Activated CD4-positive, alpha-beta memory T cell treated with anti-CD3 and anti-CD28 coated beads for 36 hours (primary cell): ENCODE measurements at regions of chr12 and their contacts with region 1.

Region 1: GRCh38 chr12:107402041-107403022 is 283.3 kb upstream of the PWP1 start:
- DNase-seq: peak; percentile 77
- H3K4me3 Mint-ChIP-seq: no peak overlapping the region
- H3K27ac Mint-ChIP-seq: no peak overlapping the region
- H3K4me1 Mint-ChIP-seq: peaks cover 6% of the 10 kb centered on the region
- H3K27me3 Mint-ChIP-seq: no peaks in the 10 kb centered on the region

Region 2: GRCh38 chr12:107225635-107226034 is 176.7 kb before region 1 on chr12:
- CTCF ChIA-PET with region 1: interaction called, 4 read pairs
- POLR2A ChIA-PET with region 1: no interaction called
- intact Hi-C with region 1: loop called (anchors 10 kb)
- DNase-seq: no peak
- H3K4me3 Mint-ChIP-seq: no peak overlapping the region
- H3K27ac Mint-ChIP-seq: no peak overlapping the region
- H3K4me1 Mint-ChIP-seq: peaks cover 3% of the 10 kb centered on the region
- H3K27me3 Mint-ChIP-seq: peaks cover 19% of the 10 kb centered on the region

Region 3: GRCh38 chr12:107328442-107329133 is 73.7 kb before region 1 on chr12:
- CTCF ChIA-PET with region 1: interaction called, 10 read pairs
- POLR2A ChIA-PET with region 1: no interaction called
- intact Hi-C with region 1: no loop called
- DNase-seq: peak; percentile 51
- H3K4me3 Mint-ChIP-seq: no peak overlapping the region
- H3K27ac Mint-ChIP-seq: no peak overlapping the region
- H3K4me1 Mint-ChIP-seq: peaks cover 63% of the 10 kb centered on the region
- H3K27me3 Mint-ChIP-seq: no peaks in the 10 kb centered on the region

Region 4: DNA sequence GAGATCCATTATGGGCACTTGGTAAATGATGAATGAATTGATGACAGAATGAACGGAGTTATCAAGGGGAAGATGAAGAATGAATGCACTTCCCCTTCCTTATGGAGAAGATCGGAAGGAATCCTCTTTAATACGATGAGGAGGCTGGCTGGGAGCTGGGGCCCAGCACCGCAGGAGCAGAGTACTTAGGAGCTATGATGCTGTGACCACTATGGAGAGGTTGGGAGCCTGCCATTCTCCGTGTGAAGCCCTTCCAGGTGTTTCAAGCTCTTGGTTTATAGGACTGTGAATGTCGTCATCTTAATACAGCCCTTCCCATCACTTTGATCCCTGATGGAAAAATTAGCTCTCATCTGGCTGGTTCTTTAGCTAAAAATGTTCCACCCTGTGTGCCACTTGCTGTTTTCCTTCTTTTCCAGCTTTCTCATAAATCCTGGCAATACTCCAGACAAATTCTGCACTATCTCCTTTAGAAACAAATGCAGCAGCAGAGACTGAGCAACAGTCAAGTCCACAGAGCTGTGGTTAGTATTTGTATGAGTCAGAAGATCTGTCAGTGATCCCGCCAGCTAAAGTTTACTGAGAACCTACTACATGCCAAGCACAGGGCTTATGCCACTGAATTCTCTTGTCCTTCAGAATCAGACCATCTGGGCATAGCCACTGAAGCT is 45.9 kb before region 1 on chr12:
- CTCF ChIA-PET with region 1: interaction called, 16 read pairs
- POLR2A ChIA-PET with region 1: no interaction called
- intact Hi-C with region 1: no loop called
- DNase-seq: no peak
- H3K4me3 Mint-ChIP-seq: no peak overlapping the region
- H3K27ac Mint-ChIP-seq: no peak overlapping the region
- H3K4me1 Mint-ChIP-seq: peaks cover 34% of the 10 kb centered on the region
- H3K27me3 Mint-ChIP-seq: no peaks in the 10 kb centered on the region

Region 5: GRCh38 chr12:107361970-107362369 is 40.4 kb before region 1 on chr12:
- CTCF ChIA-PET with region 1: interaction called, 16 read pairs
- POLR2A ChIA-PET with region 1: no interaction called
- intact Hi-C with region 1: no loop called
- DNase-seq: no peak
- H3K4me3 Mint-ChIP-seq: no peak overlapping the region
- H3K27ac Mint-ChIP-seq: no peak overlapping the region
- H3K4me1 Mint-ChIP-seq: peaks cover 11% of the 10 kb centered on the region
- H3K27me3 Mint-ChIP-seq: no peaks in the 10 kb centered on the region

Region 6: GRCh38 chr12:107372229-107372658 is 30.1 kb before region 1 on chr12:
- CTCF ChIA-PET with region 1: interaction called, 15 read pairs
- POLR2A ChIA-PET with region 1: no interaction called
- intact Hi-C with region 1: loop called (anchors 1 kb)
- DNase-seq: peak; percentile 54
- H3K4me3 Mint-ChIP-seq: no peak overlapping the region
- H3K27ac Mint-ChIP-seq: peak overlapping the region; percentile 89
- H3K4me1 Mint-ChIP-seq: peaks cover 70% of the 10 kb centered on the region
- H3K27me3 Mint-ChIP-seq: no peaks in the 10 kb centered on the region

Region 7: GRCh38 chr12:107444771-107445170 is 42.4 kb after region 1 on chr12:
- CTCF ChIA-PET with region 1: no interaction called
- POLR2A ChIA-PET with region 1: no interaction called
- intact Hi-C with region 1: no loop called
- DNase-seq: no peak
- H3K4me3 Mint-ChIP-seq: no peak overlapping the region
- H3K27ac Mint-ChIP-seq: no peak overlapping the region
- H3K4me1 Mint-ChIP-seq: peaks cover 10% of the 10 kb centered on the region
- H3K27me3 Mint-ChIP-seq: no peaks in the 10 kb centered on the region

Region 8: GRCh38 chr12:107607464-107608392 is 205.4 kb after region 1 on chr12:
- CTCF ChIA-PET with region 1: interaction called, 14 read pairs
- POLR2A ChIA-PET with region 1: no interaction called
- intact Hi-C with region 1: loop called (anchors 1 kb)
- DNase-seq: peak; percentile 84
- H3K4me3 Mint-ChIP-seq: no peak overlapping the region
- H3K27ac Mint-ChIP-seq: no peak overlapping the region
- H3K4me1 Mint-ChIP-seq: no peaks in the 10 kb centered on the region
- H3K27me3 Mint-ChIP-seq: no peaks in the 10 kb centered on the region